Sigmoid colon (tissue), 7 donors: ENCODE measurements at regions of chr5 and their contacts with region 1.

Region 1: GRCh38 chr5:60382716-60383115 is 317.2 kb downstream of the DEPDC1B start:
- DNase-seq: no peak
- H3K4me3 ChIP-seq: no peak overlapping the region
- H3K27ac ChIP-seq: peak overlapping the region in 2 of 4 donors; percentile 42 to 85
- H3K4me1 ChIP-seq: peaks cover 0 to 54% (median 37%) of the 10 kb centered on the region in 4 donors
- H3K27me3 ChIP-seq: no peaks in the 10 kb centered on the region
- CTCF ChIP-seq: peak in 2 of 4 experiments; percentile 34 to 50
- EP300 ChIP-seq: no peak
- POLR2A ChIP-seq: no peak

Region 2: DNA sequence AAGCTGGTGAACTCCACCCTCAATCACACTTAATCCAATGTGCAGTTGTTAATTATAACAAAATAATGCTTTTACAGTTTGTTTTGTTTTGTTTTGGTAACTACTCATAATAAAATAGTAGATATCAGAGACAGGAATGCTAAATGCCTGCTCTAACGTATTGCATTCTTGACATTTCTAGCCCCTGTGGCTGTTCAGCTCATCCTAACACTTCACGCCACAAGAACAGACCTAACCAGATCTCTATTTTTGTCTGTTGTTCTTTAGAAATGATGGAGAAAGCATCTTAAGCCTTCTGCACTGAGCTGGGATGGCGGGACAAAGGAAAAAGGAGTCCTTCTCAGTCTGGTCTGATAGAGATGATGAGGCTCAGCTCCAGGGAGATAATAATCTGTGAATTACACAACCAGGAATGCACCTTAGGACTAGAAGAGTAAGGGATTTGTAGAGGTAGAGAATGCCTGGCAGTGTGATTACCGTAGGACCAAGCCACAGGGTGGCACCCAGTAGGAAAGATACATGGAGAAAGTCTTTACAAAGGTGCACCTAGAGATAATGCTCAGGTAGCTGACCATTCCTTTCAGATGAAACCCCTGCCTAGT is 1118.0 kb before region 1 on chr5:
- intact Hi-C with region 1: no loop called
- DNase-seq: no peak
- H3K4me3 ChIP-seq: peak overlapping the region in 1 of 4 donors; percentile 8
- H3K27ac ChIP-seq: peak overlapping the region; percentile 58 to 90 (median 78)
- H3K4me1 ChIP-seq: peaks cover 0 to 98% (median 45%) of the 10 kb centered on the region in 4 donors
- H3K27me3 ChIP-seq: no peaks in the 10 kb centered on the region
- CTCF ChIP-seq: no peak
- EP300 ChIP-seq: no peak
- POLR2A ChIP-seq: no peak

Region 3: GRCh38 chr5:59810041-59810440 is 572.7 kb before region 1 on chr5:
- intact Hi-C with region 1: loop called (anchors 2 kb)
- DNase-seq: peak; percentile 85
- H3K4me3 ChIP-seq: peak overlapping the region in 2 of 4 donors; percentile 16 to 26
- H3K27ac ChIP-seq: no peak overlapping the region
- H3K4me1 ChIP-seq: peaks cover 0 to 4% (median 0%) of the 10 kb centered on the region in 4 donors
- H3K27me3 ChIP-seq: no peaks in the 10 kb centered on the region
- CTCF ChIP-seq: peak; percentile 64 to 90 (median 86)
- EP300 ChIP-seq: no peak
- POLR2A ChIP-seq: no peak

Region 4: DNA sequence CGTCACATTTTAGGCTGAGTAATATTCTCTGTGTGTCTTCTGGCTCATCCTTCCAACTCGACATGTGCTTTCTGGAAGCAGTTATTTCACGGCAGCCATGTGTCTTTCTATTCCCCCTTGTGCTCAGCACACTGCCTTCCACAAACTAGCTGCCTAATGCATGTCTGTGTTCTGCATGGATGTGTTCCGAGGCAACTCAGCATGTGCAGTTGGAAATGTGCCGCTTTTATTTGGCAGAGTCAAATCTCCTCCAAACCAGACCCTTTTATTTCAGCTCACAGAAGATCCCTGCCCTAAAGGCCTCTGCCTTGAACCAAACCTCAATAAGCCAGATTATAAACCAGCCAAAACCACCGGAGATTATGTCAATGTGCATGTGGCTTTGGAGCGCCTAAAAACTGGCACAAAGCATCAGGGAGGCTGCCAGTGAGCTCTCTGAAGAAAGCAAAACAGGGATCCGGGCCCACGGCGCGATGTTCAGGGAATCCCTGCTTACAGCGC is 43.0 kb before region 1 on chr5:
- intact Hi-C with region 1: loop called (anchors 5 kb)
- DNase-seq: peak; percentile 72
- H3K4me3 ChIP-seq: no peak overlapping the region
- H3K27ac ChIP-seq: peak overlapping the region; percentile 35 to 75 (median 70)
- H3K4me1 ChIP-seq: peaks cover 0 to 45% (median 37%) of the 10 kb centered on the region in 4 donors
- H3K27me3 ChIP-seq: no peaks in the 10 kb centered on the region
- CTCF ChIP-seq: no peak
- EP300 ChIP-seq: no peak
- POLR2A ChIP-seq: no peak

Region 5: DNA sequence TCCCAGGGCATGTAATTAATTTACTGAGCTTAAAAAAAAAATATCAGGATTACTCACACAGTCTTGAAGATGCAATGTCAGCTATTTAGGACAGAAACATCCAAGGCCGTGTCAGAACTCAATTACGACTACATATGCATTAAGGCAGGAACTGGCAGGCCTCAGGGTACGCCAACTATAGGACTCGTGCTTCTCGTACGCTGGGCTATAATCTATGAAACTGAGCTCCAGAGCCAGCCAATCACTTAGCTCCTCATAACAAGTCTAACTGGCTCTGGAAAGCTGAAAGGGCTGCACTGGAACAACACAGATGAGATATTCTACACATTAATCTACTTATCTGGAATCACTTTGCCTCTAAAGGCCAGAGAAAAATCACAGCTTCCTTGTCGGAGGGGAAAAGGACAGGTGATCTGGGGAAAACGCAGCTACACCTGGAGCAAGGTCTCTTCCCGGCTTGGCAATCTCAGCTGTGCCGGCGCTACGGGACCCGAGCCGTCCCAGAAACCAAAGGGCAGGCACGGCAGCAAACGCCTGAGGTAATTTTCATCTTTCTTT is 105.2 kb after region 1 on chr5:
- intact Hi-C with region 1: loop called (anchors 5 kb)
- DNase-seq: no peak
- H3K4me3 ChIP-seq: peak overlapping the region; percentile 35 to 56 (median 46)
- H3K27ac ChIP-seq: peak overlapping the region; percentile 73 to 84 (median 78)
- H3K4me1 ChIP-seq: peaks cover 0 to 40% (median 15%) of the 10 kb centered on the region in 4 donors
- H3K27me3 ChIP-seq: no peaks in the 10 kb centered on the region
- CTCF ChIP-seq: no peak
- EP300 ChIP-seq: no peak
- POLR2A ChIP-seq: no peak

Region 6: GRCh38 chr5:60546196-60546595 is 163.5 kb after region 1 on chr5:
- intact Hi-C with region 1: loop called (anchors 5 kb)
- DNase-seq: peak; percentile 77
- H3K4me3 ChIP-seq: no peak overlapping the region
- H3K27ac ChIP-seq: peak overlapping the region; percentile 45 to 81 (median 66)
- H3K4me1 ChIP-seq: peaks cover 0 to 53% (median 38%) of the 10 kb centered on the region in 4 donors
- H3K27me3 ChIP-seq: no peaks in the 10 kb centered on the region
- CTCF ChIP-seq: no peak
- EP300 ChIP-seq: peak in 1 of 4 donors; percentile 38
- POLR2A ChIP-seq: no peak

Region 7: DNA sequence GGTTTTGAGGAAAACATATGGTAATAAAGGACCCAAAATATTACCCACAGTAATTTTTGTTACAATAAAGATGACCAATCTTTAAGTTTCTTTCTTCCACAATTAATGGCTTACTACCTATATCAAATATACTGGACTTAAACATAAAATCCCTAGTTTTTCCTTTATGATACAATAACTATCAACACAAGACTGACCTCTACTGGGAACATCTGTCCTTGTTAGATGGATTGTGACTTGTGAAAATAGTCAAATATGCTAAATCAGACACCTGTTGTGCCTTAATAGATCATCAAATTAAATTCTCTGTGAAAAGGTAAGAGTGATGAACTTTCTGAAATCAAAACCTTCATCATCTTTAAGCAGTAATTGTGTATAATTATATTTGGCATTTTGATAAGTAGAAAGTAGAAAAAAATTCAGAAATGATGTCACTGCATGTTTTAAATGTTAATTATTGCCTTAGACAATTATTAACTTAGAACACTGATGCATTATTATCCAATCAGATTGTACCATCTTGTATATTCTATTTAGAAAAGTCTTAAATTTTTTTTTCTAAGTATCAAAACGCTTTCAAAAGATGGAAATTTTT is 203.7 kb after region 1 on chr5:
- intact Hi-C with region 1: loop called (anchors 10 kb)
- DNase-seq: no peak
- H3K4me3 ChIP-seq: no peak overlapping the region
- H3K27ac ChIP-seq: no peak overlapping the region
- H3K4me1 ChIP-seq: peaks cover 0 to 12% (median 2%) of the 10 kb centered on the region in 4 donors
- H3K27me3 ChIP-seq: no peaks in the 10 kb centered on the region
- CTCF ChIP-seq: peak; percentile 36 to 59 (median 38)
- EP300 ChIP-seq: no peak
- POLR2A ChIP-seq: no peak